Psoas muscle (tissue), 8 donors: ENCODE measurements at regions of chr13 and their contacts with region 1.

Region 1: GRCh38 chr13:100514788-100515409 is 73.7 kb downstream of the GGACT start:
- DNase-seq: peak; percentile 78 to 86
- ATAC-seq: peak; percentile 81 to 96 (median 90)
- H3K4me3 ChIP-seq: no peak overlapping the region
- H3K27ac ChIP-seq: no peak overlapping the region
- H3K4me1 ChIP-seq: no peaks in the 10 kb centered on the region
- H3K27me3 ChIP-seq: no peaks in the 10 kb centered on the region
- CTCF ChIP-seq: peak; percentile 91

Region 2: DNA sequence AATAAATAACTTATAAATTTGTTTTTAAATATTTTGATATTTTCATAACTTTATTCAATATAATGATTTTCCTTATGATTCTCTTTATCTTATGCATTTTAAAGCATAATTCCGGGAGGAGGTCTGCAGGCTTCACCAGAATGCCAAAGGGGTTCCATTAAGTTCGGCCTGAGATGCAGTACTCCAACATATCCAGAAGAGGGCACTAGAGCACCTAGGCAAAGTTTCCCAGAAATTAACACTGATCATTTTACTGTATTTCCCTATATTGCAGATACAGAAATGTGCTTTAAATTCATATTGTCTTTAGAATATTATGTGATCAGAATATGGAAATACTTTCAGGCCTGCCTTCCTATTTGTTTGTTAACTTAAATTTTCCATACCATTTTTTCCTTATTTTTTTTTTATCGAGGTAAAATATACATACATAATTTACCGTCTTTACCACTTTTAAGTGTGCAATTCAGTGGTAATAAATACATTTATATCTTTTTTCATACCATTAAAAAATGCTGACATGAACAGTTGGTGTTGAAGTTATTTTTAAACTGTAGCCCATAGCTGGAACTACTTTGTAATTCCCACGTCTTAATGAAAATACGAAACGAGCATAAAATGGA is 1072.5 kb before region 1 on chr13:
- intact Hi-C with region 1: loop called in 1 of 2 experiments (anchors 10 kb)
- DNase-seq: no peak
- ATAC-seq: peak in 3 of 4 donors; percentile 63 to 75 (median 74)
- H3K4me3 ChIP-seq: no peak overlapping the region
- H3K27ac ChIP-seq: no peak overlapping the region
- H3K4me1 ChIP-seq: no peaks in the 10 kb centered on the region
- H3K27me3 ChIP-seq: peaks cover 0 to 3% (median 0%) of the 10 kb centered on the region in 3 donors
- CTCF ChIP-seq: peak; percentile 97

Region 3: GRCh38 chr13:99656092-99656745 is 858.7 kb before region 1 on chr13:
- intact Hi-C with region 1: loop called (anchors 2 to 5 kb)
- DNase-seq: peak; percentile 64 to 70
- ATAC-seq: peak; percentile 87 to 93 (median 88)
- H3K4me3 ChIP-seq: no peak overlapping the region
- H3K27ac ChIP-seq: no peak overlapping the region
- H3K4me1 ChIP-seq: no peaks in the 10 kb centered on the region
- H3K27me3 ChIP-seq: no peaks in the 10 kb centered on the region
- CTCF ChIP-seq: peak; percentile 87

Region 4: GRCh38 chr13:99908140-99908803 is 606.6 kb before region 1 on chr13:
- intact Hi-C with region 1: loop called (anchors 5 kb)
- DNase-seq: no peak
- ATAC-seq: no peak
- H3K4me3 ChIP-seq: no peak overlapping the region
- H3K27ac ChIP-seq: no peak overlapping the region
- H3K4me1 ChIP-seq: no peaks in the 10 kb centered on the region
- H3K27me3 ChIP-seq: peaks cover 0 to 75% (median 17%) of the 10 kb centered on the region in 3 donors
- CTCF ChIP-seq: no peak

Region 5: GRCh38 chr13:100235311-100235901 is 279.5 kb before region 1 on chr13:
- intact Hi-C with region 1: loop called in 1 of 2 experiments (anchors 5 kb)
- DNase-seq: no peak
- ATAC-seq: peak in 1 of 4 donors; percentile 58
- H3K4me3 ChIP-seq: no peak overlapping the region
- H3K27ac ChIP-seq: no peak overlapping the region
- H3K4me1 ChIP-seq: no peaks in the 10 kb centered on the region
- H3K27me3 ChIP-seq: no peaks in the 10 kb centered on the region
- CTCF ChIP-seq: peak; percentile 55